Psoas muscle (tissue), 8 donors: ENCODE measurements at regions of chr3 and their contacts with region 1.

Region 1: DNA sequence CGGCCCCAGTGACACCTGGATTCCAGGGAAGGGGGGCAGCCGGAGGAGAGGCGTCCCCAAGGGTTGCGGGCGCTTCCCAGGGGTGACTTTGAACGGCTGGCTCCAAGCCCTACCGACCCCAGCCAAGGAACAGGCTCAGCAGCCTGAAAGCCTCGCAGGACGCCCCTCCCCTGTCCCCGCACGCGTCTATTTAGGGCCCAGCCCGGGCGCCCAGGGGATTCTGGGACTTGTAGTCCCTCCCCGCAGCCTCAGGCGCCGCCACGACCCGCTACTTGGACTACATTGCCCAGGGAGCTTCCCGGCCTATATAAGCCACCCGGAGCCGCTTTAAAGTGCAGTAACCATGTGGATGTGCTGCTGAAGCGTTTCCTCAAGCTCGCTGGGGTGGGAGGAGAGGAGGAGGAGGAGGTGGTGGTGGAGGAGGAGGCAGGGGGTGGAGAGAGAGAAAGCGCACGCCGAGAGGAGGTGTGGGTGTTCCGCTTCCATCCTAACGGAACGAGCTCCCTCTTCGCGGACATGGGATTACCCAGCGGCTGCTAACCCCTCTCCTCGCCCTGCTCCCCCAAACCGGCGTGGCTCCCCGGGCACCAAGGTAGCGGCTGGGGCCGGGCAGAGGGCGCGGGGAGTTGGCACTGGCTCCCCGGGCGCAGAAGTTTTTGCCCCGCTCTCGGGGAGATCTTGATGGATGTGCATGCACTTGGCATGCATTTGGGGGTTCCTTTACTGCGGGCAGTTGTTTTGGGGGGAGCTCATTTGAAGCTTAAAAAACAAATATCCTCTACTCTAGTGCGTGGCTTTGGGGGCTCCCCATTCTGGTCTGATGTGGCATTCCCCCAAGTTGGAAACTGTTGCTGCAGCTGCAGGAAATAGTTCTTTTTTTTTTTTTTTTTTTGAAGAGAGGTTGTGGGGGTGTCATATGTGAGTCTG is at the start of gene ITPR1:
- DNase-seq: peak; percentile 97 to 99
- ATAC-seq: peak; percentile 99
- H3K4me3 ChIP-seq: peak within 1 kb of the TSS; percentile 72
- H3K27ac ChIP-seq: peak within 1 kb of the TSS; percentile 85
- H3K4me1 ChIP-seq: peaks cover 13% of the 10 kb centered on the region
- H3K27me3 ChIP-seq: no peaks in the 10 kb centered on the region
- CTCF ChIP-seq: no peak
- total RNA-seq, gene ITPR1: 6.2 to 9.2 (median 8.3) TPM

Region 2: GRCh38 chr3:4350789-4351163 is 142.5 kb before region 1 on chr3:
- intact Hi-C with region 1: loop called (anchors 10 kb)
- DNase-seq: no peak
- ATAC-seq: peak; percentile 72 to 93 (median 78)
- H3K4me3 ChIP-seq: peak overlapping the region; percentile 42
- H3K27ac ChIP-seq: no peak overlapping the region
- H3K4me1 ChIP-seq: no peaks in the 10 kb centered on the region
- H3K27me3 ChIP-seq: no peaks in the 10 kb centered on the region
- CTCF ChIP-seq: peak; percentile 83

Region 3: GRCh38 chr3:4421121-4421520 is 72.2 kb before region 1 on chr3:
- intact Hi-C with region 1: loop called in 1 of 2 experiments (anchors 5 kb)
- DNase-seq: no peak
- ATAC-seq: peak; percentile 57 to 79 (median 69)
- H3K4me3 ChIP-seq: no peak overlapping the region
- H3K27ac ChIP-seq: peak overlapping the region; percentile 31
- H3K4me1 ChIP-seq: peaks cover 22% of the 10 kb centered on the region
- H3K27me3 ChIP-seq: no peaks in the 10 kb centered on the region
- CTCF ChIP-seq: no peak

Region 4: DNA sequence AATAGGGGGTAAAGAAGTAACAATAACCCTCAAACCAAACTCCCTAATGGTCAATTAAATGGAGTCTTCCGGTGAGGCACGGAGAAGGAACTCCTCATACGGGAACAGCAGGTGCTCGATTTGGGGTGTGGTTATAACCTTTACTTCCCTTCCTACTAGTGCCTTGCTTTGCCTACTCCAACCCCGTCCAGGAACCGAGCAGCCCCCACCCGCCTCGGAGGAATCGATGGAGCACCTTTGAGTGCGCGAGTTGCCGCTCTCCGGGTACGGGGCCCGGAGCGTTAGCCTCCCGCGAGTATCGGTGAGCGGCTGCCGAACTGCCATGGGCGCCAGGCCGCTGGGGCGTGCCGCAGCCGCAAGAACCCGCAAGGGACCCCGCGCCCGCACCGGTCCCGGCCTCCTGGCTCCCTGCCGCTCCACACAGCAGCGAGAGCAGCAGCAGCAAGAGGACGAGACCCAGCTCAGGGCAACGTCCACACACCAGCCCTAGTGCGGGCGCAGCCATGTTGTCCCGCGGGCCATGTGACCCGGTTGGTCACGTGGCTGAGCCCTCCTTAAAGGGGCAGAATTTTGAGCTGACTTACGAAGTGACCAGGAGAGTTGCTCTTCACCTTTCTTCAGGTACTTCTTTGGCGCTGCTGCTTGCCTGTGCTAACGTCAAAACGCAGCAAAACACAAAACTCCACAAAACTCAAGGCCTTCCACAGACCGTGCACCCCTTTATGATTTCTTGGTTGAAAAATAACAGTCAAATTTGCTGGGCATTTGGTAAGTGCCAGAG is 26.3 kb before region 1 on chr3 and contains the start of gene SUMF1:
- intact Hi-C with region 1: loop called in 1 of 2 experiments (anchors 2 kb)
- DNase-seq: peak; percentile 81 to 89
- ATAC-seq: peak; percentile 99 to 100 (median 100)
- H3K4me3 ChIP-seq: peak within 1 kb of the TSS; percentile 80
- H3K27ac ChIP-seq: peak within 1 kb of the TSS; percentile 85
- H3K4me1 ChIP-seq: peaks cover 8% of the 10 kb centered on the region
- H3K27me3 ChIP-seq: no peaks in the 10 kb centered on the region
- CTCF ChIP-seq: no peak
- total RNA-seq, gene SUMF1: 4.6 to 6.4 (median 5.1) TPM